ENCODE measurements at regions of chr20 and their contacts with region 1.

Region 1: GRCh38 chr20:22691369-22692118 is 107.2 kb upstream of the FOXA2 start:
- DNase-seq: peak; percentile 83
- ATAC-seq: peak; percentile 94

Region 2: GRCh38 chr20:23340524-23340923 is 649.0 kb after region 1 on chr20:
- intact Hi-C with region 1: loop called (anchors 5 kb)
- DNase-seq: peak; percentile 67
- ATAC-seq: peak; percentile 88